Activated CD8-positive, alpha-beta T cell treated with anti-CD3 and anti-CD28 coated beads for 36 hours (primary cell): ENCODE measurements at regions of chr1 and their contacts with region 1.

Region 1: DNA sequence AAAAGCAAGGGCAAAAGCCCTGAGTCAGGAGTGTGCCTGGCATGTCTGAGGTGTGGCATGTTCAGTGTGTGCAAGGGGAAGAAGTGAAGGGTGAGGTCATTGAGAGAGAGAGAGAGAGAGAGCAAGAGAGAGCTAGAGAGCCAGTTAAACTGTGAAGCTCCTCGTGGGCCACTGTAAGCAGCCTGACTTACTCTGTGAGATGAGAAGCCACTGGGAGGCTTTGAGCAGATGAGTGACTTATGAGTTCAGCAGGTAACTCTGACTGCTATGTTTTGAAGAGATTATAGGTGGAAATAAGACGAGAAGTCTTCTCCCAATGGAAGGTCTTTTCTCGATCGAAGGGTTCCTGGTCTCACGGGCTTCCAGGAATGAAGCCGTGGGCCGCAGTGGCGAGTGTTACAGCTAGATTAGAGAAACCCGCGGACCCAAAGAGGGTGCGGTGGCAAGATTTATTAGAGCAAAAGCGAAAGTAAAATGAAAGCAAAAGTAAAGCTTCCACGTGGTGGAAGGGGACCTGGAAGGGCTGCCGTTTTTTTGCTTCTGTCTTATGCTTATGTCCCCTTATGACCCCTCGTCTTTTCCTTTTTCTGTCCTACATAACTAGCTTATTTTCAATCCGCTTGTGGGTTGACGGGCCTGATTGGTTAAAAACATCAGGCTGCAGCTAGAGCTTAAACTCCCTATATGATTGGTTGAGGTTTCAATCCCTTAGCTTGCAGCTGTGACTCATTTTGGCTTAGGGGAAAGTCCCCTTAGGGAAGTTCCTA is 323.1 kb upstream of the FAM78B start:
- DNase-seq: peak; percentile 70
- ATAC-seq: peak; percentile 81
- H3K4me3 Mint-ChIP-seq: no peak overlapping the region
- H3K27ac Mint-ChIP-seq: no peak overlapping the region
- H3K4me1 Mint-ChIP-seq: peaks cover 15% of the 10 kb centered on the region
- H3K27me3 Mint-ChIP-seq: peaks cover 1% of the 10 kb centered on the region
- CTCF ChIP-seq: no peak

Region 2: DNA sequence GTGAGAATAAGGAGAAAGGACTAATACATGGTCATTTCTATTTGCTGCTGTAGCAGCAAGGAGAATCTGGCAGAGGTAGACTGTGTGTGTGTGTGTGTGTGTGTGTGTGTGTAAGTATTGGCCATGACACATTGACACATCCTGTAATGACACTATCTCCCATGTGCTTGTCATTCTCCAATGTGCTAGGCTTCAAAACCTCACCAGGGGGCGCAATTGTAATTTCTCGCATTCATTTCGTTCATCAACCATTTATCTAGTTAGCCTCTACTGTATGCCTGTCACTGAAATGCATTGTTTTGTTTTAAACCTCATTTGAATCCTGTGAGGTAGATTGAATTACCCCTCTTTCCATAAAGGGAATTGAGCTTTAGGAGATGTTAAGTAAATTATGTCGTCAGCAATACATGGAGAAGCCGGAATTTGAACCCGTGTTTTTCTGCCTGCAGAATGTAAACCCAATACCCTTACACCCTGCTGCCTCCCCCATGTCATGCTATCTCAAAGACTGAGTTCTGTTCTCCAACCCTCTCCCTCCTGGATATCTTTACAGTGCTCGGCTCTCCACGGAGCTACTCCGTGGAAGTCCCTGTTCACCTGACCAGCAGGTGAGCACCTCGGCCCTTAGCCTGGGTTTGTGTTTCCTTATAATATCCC is 561.6 kb before region 1 on chr1:
- CTCF ChIA-PET with region 1: no interaction called
- POLR2A ChIA-PET with region 1: no interaction called
- intact Hi-C with region 1: loop called (anchors 5 kb)
- DNase-seq: peak; percentile 71
- ATAC-seq: peak; percentile 85
- H3K4me3 Mint-ChIP-seq: no peak overlapping the region
- H3K27ac Mint-ChIP-seq: no peak overlapping the region
- H3K4me1 Mint-ChIP-seq: no peaks in the 10 kb centered on the region
- H3K27me3 Mint-ChIP-seq: peaks cover 19% of the 10 kb centered on the region
- CTCF ChIP-seq: peak; percentile 72

Region 3: GRCh38 chr1:166470014-166470413 is 19.8 kb before region 1 on chr1:
- CTCF ChIA-PET with region 1: no interaction called
- POLR2A ChIA-PET with region 1: no interaction called
- intact Hi-C with region 1: no loop called
- DNase-seq: no peak
- ATAC-seq: no peak
- H3K4me3 Mint-ChIP-seq: no peak overlapping the region
- H3K27ac Mint-ChIP-seq: no peak overlapping the region
- H3K4me1 Mint-ChIP-seq: no peaks in the 10 kb centered on the region
- H3K27me3 Mint-ChIP-seq: peaks cover 27% of the 10 kb centered on the region
- CTCF ChIP-seq: no peak

Region 4: DNA sequence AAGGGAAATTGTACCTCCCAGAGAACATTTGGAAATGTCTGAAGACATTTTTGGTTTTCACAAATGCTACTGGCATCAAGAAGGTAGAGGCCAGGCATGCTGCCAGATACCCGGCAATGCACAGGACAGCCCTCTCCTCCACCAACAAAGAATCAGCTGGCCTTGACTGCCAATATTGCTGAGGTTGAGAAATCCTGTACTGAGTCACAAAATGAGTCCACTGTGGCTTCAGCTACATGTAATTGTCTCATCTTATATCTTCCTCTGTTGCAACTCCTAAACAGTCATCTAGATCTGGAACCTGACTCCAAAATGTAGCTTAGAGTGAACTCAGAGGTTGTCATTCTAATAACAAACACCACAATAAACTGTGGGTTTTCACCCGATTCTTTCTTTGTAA is 21.9 kb after region 1 on chr1:
- CTCF ChIA-PET with region 1: no interaction called
- POLR2A ChIA-PET with region 1: no interaction called
- intact Hi-C with region 1: no loop called
- DNase-seq: no peak
- ATAC-seq: no peak
- H3K4me3 Mint-ChIP-seq: no peak overlapping the region
- H3K27ac Mint-ChIP-seq: no peak overlapping the region
- H3K4me1 Mint-ChIP-seq: no peaks in the 10 kb centered on the region
- H3K27me3 Mint-ChIP-seq: peaks cover 6% of the 10 kb centered on the region
- CTCF ChIP-seq: no peak

Region 5: GRCh38 chr1:166538646-166539045 is 48.8 kb after region 1 on chr1:
- CTCF ChIA-PET with region 1: no interaction called
- POLR2A ChIA-PET with region 1: no interaction called
- intact Hi-C with region 1: no loop called
- DNase-seq: no peak
- ATAC-seq: no peak
- H3K4me3 Mint-ChIP-seq: no peak overlapping the region
- H3K27ac Mint-ChIP-seq: no peak overlapping the region
- H3K4me1 Mint-ChIP-seq: no peaks in the 10 kb centered on the region
- H3K27me3 Mint-ChIP-seq: peaks cover 5% of the 10 kb centered on the region
- CTCF ChIP-seq: no peak

Region 6: DNA sequence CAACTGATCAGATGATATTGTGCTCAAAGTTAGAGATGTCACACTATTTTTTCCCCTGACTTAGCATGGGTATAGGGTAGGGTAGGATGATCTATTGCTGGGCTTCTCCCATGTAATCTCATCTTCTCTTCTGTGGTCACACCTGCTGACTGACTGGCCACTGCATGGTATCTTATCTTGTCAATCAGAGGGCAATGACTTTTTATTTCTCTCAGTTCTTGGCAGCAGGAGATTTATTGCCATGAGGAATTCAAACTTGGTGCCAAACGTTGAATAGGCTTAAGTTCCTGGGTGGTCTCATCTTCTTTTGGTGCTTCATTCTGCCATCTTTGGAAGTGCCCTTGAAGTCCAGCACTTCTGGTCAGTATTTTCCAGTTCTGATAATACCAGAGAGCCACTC is 123.0 kb after region 1 on chr1:
- CTCF ChIA-PET with region 1: no interaction called
- POLR2A ChIA-PET with region 1: no interaction called
- intact Hi-C with region 1: no loop called
- DNase-seq: no peak
- ATAC-seq: no peak
- H3K4me3 Mint-ChIP-seq: no peak overlapping the region
- H3K27ac Mint-ChIP-seq: no peak overlapping the region
- H3K4me1 Mint-ChIP-seq: no peaks in the 10 kb centered on the region
- H3K27me3 Mint-ChIP-seq: peaks cover 1% of the 10 kb centered on the region
- CTCF ChIP-seq: no peak